PC-3 (cell line): ENCODE measurements at regions of chr3 and their contacts with region 1.

Region 1: GRCh38 chr3:32667122-32667521 is 17.9 kb upstream of the CNOT10 start:
- DNase-seq: peak; percentile 45
- ATAC-seq: peak; percentile 27
- H3K4me3 ChIP-seq: no peak overlapping the region
- H3K27ac ChIP-seq: no peak overlapping the region
- H3K4me1 ChIP-seq: peaks cover 6% of the 10 kb centered on the region; the same call in 1 of the 2 replicates
- H3K27me3 ChIP-seq: no peaks in the 10 kb centered on the region
- CTCF ChIP-seq: no peak

Region 2: DNA sequence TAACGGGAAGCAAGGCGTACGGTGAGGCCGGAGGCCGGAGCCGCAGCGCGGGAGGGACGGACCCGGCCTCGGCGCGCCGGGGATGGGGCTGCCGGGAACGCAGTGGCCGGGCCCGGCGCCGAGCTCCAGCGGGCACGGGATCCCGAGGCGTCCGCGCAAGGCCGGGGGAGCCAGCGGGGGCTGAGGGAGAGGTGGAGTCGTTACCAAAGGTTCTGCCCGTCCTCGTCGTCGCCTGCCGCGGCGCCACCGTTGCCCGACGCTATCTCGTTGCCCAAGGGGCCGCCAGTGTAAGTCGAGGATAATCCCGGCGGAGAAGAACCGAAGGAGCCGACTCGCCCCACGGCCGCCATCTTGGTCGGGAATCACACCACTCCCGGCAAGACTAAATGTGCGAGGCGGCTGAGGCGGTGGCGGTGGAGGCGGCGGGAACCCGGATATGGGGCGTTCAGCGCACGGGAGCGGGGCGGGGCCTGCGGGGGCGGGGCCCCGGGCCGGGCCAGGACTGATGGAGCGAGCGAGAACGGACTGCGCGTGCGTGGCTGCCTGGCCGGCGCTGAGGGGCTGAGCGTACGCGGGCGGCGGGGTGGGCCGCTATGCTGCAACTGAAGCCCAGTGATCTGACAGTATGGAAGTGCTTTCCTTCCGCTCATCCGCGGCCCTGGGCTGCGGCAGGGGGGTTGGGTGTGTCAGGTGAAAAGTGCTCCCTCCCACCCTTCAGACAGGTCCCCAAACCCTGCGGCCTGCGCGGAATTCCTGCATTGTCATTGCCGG is 96.5 kb before region 1 on chr3 and contains the start of gene DYNC1LI1:
- CTCF ChIA-PET with region 1: interaction called, 3 read pairs
- POLR2A ChIA-PET with region 1: no interaction called
- intact Hi-C with region 1: loop called (anchors 5 kb)
- DNase-seq: peak; percentile 95
- ATAC-seq: peak; percentile 88
- H3K4me3 ChIP-seq: peak within 1 kb of the TSS; percentile 82
- H3K27ac ChIP-seq: peak within 1 kb of the TSS; percentile 80
- H3K4me1 ChIP-seq: peaks cover 24% of the 10 kb centered on the region
- H3K27me3 ChIP-seq: no peaks in the 10 kb centered on the region
- CTCF ChIP-seq: no peak
- total RNA-seq, gene DYNC1LI1: 44.2 and 55.6 TPM in 2 replicates